ENCODE measurements at regions of chr22 and their contacts with region 1.

Region 1: GRCh38 chr22:22848364-22848866 is 39.2 kb upstream of the IGLL5 start:
- DNase-seq: peak; percentile 59
- CTCF ChIP-seq: peak; percentile 88

Region 2: DNA sequence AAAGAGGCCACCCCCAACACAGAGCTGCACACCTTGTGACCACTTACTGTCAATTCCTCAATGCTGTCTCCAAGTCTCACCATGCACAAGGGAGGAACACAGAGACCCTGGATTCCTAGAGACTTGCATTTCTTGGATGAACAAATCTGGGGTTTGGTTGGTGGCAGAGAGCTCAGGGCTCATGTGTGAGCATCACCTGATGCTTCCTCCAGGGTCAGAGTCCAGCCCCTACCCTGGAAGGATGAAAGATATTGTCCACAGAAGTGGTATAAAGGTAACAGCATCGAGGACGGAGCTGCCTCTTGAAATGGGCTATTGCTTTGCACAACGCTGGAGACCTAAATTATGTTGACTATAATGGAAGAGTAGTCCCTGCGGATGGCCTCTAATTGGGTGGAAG is 168.0 kb before region 1 on chr22:
- CTCF ChIA-PET with region 1: no interaction called
- POLR2A ChIA-PET with region 1: no interaction called
- DNase-seq: no peak
- CTCF ChIP-seq: no peak

Region 3: DNA sequence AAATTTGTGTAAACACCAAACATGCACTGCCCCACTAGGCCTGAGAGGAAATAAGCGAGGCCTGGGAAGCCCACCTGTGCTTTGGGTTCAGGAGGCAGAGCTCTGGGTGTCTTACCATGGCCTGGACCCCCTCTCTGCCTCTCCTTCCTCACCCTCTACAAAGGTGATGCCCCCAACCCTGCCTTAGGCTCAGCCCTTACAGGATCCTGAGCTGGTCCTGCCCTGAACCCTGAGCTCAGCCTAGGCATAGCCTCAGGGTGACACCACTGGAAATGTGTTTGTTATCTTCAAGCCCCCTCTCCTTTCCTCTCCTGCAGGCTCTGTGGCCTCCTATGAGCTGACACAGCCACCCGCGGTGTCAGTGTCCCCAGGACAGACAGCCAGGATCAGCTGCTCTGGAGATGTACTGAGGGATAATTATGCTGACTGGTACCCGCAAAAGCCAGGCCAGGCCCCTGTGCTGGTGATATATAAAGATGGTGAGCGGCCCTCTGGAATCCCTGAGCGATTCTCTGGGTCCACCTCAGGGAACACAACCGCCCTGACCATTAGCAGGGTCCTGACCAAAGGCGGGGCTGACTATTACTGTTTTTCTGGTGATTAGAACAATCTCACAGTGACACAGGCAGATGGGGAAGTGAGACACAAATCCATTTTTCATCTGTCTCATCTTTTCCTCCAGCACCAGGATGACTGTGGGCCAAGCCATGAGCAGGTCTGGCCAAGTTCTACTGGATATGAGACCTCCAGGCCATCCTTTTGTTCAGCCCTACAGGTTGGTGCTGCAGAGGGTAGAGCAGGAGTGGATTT is 86.2 kb before region 1 on chr22:
- CTCF ChIA-PET with region 1: no interaction called
- POLR2A ChIA-PET with region 1: no interaction called
- DNase-seq: no peak
- CTCF ChIP-seq: no peak

Region 4: DNA sequence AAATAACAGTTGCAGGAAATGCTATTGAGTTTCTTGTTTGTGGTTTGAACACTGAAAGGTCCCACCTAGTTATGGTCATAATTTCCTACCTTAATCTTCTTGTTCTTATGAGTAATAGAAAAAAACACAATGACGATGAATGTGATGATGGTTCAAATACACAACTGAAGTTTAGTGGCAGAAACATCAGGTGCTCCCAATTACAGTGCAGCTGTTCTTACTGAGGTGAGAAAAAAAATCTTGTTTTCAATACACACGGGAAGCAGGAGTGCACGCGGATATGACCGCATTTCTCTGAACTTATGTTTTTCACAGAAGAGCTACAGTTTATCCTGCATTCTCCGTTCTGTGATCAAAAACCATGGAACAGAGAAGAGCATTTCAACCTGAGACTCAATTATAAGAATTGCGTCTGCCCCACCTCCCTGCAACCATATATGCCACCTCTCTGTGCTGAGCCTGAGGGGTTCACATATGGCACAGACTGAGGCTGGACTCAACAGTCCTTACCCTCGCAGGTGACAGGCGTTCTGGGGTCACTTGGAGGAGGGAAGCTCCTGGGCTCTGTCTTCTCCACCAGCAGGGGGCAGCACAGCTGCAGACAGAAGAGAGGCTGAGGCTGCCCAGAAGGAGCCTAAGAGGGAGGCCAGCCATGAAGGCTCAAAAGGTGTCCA is 60.5 kb before region 1 on chr22:
- CTCF ChIA-PET with region 1: interaction called, 19 read pairs
- POLR2A ChIA-PET with region 1: no interaction called
- DNase-seq: peak; percentile 79
- CTCF ChIP-seq: peak; percentile 85

Region 5: GRCh38 chr22:22838148-22838786 is 10.1 kb before region 1 on chr22:
- CTCF ChIA-PET with region 1: interaction called, 15 read pairs
- POLR2A ChIA-PET with region 1: no interaction called
- DNase-seq: no peak
- CTCF ChIP-seq: no peak

Region 6: DNA sequence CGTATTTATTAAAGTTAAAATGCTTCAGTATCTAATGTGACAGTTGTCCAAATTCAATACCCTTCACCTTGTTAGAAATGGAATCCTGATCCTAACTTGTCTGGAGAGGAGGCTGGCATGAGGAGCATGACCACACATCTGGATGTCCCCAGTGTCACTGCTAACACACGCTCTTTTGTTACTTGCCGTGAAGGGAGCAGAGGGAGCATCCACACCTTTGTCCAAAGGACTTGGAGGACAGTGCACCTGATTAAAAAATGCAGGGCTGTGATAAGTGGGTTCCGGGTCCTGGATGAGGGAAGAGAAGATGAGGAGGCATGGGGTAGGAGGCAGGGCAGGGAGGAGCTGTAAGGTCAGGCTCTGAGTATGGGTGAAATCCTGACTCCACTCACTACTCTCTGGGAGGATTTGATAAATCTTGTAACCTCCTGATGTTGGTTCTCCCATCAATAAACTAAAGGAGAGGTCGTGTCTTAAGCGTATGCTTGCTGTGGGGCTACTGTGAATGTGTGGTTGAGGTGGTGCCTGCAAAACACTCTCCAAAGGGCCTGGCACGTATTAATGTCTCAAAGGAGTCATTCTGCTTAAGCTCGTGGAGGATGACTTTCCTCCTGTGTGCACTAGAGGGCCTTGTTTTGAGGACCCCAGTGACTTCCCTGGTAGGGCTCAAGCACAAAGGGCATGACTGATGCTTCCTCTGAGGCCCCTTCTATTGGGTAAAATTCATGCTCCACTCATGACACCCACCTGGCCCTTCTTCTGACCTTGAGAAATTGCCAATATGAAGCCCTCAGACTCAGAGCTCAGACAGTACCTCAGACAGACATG is 22.4 kb after region 1 on chr22:
- CTCF ChIA-PET with region 1: interaction called, 26 read pairs
- POLR2A ChIA-PET with region 1: no interaction called
- DNase-seq: no peak
- CTCF ChIP-seq: peak; percentile 38

Region 7: DNA sequence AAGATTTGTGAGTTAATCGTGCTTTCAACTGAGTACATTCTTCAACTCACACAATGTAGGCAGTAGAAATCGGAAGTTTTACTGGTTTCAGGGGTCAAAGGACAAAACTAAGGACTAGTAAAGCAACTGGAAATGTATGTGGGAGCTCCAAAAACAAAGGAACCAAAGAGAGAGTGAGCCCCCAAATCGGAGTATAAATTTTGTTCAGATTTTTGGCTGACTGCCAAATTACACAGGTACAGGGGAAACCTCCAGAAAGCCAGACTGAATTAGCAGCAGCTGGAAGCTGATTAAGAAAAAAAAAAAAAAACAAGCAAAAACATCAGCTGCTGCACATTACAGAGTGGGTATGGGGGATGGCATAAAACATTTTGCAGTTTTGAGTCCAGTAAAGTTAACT is 146.8 kb after region 1 on chr22:
- CTCF ChIA-PET with region 1: no interaction called
- POLR2A ChIA-PET with region 1: no interaction called
- DNase-seq: no peak
- CTCF ChIP-seq: no peak

Measured in GM10248 (cell line).